ENCODE measurements at regions of chr13 and their contacts with region 1.

Region 1: GRCh38 chr13:31846182-31846950 is 107.0 kb downstream of the RXFP2 start:
- DNase-seq: peak; percentile 80
- ATAC-seq: peak; percentile 98
- H3K4me3 Mint-ChIP-seq: peak overlapping the region; percentile 83
- H3K27ac Mint-ChIP-seq: no peak overlapping the region
- H3K4me1 Mint-ChIP-seq: peaks cover 9% of the 10 kb centered on the region
- H3K27me3 Mint-ChIP-seq: peaks cover 27% of the 10 kb centered on the region
- CTCF ChIP-seq: no peak

Region 2: GRCh38 chr13:31862828-31863227 is 16.5 kb after region 1 on chr13:
- CTCF ChIA-PET with region 1: no interaction called
- POLR2A ChIA-PET with region 1: no interaction called
- intact Hi-C with region 1: loop called (anchors 2 kb)
- DNase-seq: no peak
- ATAC-seq: no peak
- H3K4me3 Mint-ChIP-seq: no peak overlapping the region
- H3K27ac Mint-ChIP-seq: no peak overlapping the region
- H3K4me1 Mint-ChIP-seq: peaks cover 21% of the 10 kb centered on the region
- H3K27me3 Mint-ChIP-seq: peaks cover 10% of the 10 kb centered on the region
- CTCF ChIP-seq: no peak

Region 3: GRCh38 chr13:32267836-32268439 is 421.6 kb after region 1 on chr13:
- CTCF ChIA-PET with region 1: no interaction called
- POLR2A ChIA-PET with region 1: no interaction called
- intact Hi-C with region 1: no loop called
- DNase-seq: peak; percentile 22
- ATAC-seq: peak; percentile 93
- H3K4me3 Mint-ChIP-seq: no peak overlapping the region
- H3K27ac Mint-ChIP-seq: no peak overlapping the region
- H3K4me1 Mint-ChIP-seq: no peaks in the 10 kb centered on the region
- H3K27me3 Mint-ChIP-seq: no peaks in the 10 kb centered on the region
- CTCF ChIP-seq: peak; percentile 67